Mammary epithelial cell (primary cell): ENCODE measurements at regions of chr14 and their contacts with region 1.

Region 1: GRCh38 chr14:98341206-98341605 is 930.8 kb downstream of the BCL11B start:
- DNase-seq: no peak
- H3K4me3 ChIP-seq: no peak overlapping the region
- H3K27ac ChIP-seq: no peak overlapping the region
- H3K4me1 ChIP-seq: peaks cover 9% of the 10 kb centered on the region
- H3K27me3 ChIP-seq: no peaks in the 10 kb centered on the region
- CTCF ChIP-seq: no peak

Region 2: GRCh38 chr14:97642631-97643030 is 698.6 kb before region 1 on chr14:
- CTCF ChIA-PET with region 1: interaction called, 16 read pairs
- dilution Hi-C with region 1: no loop called
- in situ Hi-C with region 1: no loop called
- intact Hi-C with region 1: no loop called
- DNase-seq: no peak
- H3K4me3 ChIP-seq: no peak overlapping the region
- H3K27ac ChIP-seq: no peak overlapping the region
- H3K4me1 ChIP-seq: no peaks in the 10 kb centered on the region
- H3K27me3 ChIP-seq: no peaks in the 10 kb centered on the region
- CTCF ChIP-seq: no peak

Region 3: DNA sequence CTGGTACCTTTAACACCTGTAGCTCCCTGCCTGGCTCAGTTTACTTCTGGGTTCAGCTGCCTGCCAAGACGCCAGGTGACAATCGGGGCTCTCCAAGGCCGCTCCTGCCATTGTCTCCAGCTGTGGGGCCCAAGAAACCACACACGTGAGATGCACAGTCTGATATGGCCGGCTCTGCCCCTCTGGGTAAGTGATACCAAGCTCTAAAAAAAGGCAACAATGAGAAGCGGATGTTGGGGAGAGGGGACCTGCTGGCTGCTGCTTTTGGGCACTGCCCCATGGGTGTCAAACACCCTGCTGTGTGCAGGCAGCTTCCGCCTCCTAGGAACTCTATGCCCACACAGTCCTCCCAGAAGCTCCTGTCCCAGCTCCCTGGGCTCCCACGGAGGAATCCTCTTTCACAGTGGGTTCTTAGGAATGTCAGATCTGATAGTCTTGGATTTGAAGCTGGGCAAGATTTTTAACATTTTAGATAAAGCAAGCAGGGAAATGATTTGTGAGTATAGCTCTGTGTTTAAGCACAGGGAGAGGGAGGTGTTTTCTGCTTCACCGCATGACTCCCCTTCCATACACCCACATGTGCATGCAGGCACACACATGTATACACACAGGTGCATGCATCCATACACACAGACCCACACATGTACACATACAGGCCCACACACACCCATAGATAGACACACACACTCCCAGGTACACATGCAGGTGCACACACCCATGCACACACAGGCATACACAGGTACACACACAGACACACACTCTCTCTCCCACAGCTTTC is 205.0 kb before region 1 on chr14:
- CTCF ChIA-PET with region 1: no interaction called
- dilution Hi-C with region 1: no loop called
- in situ Hi-C with region 1: no loop called
- intact Hi-C with region 1: no loop called
- DNase-seq: no peak
- H3K4me3 ChIP-seq: no peak overlapping the region
- H3K27ac ChIP-seq: no peak overlapping the region
- H3K4me1 ChIP-seq: peaks cover 4% of the 10 kb centered on the region
- H3K27me3 ChIP-seq: no peaks in the 10 kb centered on the region
- CTCF ChIP-seq: no peak